ENCODE measurements at regions of chr6 and their contacts with region 1.

Region 1: DNA sequence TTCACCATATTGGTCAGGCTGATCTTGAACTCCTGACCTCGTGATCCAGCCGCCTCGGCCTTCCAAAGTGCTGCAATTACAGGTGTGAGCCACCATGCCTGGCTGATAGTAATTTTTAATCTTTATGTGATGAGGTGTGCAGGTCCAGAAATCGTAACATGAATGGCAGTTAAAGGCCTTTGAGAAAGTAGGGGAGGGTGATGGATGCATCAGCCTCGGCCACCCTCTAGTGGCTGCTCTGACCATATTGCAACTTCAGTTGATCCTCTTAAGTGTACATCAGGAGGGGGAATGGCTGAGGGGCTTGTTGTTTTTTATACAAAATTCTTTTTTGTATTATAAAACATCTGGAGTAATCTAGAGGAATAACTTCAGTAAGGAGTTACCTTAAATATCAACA is 193.0 kb downstream of the ZFAND3 start:
- DNase-seq: peak; percentile 64
- H3K27ac ChIP-seq: no peak overlapping the region
- CTCF ChIP-seq: peak; percentile 72

Region 2: DNA sequence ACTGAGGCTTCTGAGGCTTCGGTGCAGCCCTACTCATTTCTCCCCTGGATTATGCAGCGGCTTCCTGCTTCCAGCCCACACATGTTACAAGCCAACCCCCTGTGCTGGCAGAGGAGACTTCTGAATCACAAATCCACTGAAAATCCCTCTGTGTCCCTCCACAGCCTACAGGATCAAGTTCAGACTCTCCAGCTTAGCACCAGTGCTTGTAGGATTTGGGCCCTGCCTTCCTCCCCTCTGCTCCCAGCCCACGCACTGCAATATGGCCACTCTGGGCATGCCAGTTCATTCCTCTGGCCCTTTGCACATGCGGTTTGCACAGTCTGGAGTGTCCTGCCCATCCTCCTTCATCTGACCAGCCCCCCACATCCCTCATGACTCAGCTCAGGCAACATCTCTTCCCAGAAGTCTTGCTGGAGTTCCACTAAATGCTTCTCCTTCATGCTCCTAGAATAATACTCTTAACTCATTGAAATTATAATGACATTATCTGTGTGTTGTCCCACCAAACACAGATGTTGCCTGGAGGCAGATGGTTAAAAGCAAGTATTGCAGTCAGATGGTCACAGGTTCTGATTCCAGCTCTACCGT is 298.9 kb before region 1 on chr6:
- CTCF ChIA-PET with region 1: no interaction called
- POLR2A ChIA-PET with region 1: no interaction called
- DNase-seq: no peak
- H3K27ac ChIP-seq: 0 out of 2 replicates have a peak overlapping the region, but pooled peaks have one; percentile 11
- CTCF ChIP-seq: no peak

Region 3: DNA sequence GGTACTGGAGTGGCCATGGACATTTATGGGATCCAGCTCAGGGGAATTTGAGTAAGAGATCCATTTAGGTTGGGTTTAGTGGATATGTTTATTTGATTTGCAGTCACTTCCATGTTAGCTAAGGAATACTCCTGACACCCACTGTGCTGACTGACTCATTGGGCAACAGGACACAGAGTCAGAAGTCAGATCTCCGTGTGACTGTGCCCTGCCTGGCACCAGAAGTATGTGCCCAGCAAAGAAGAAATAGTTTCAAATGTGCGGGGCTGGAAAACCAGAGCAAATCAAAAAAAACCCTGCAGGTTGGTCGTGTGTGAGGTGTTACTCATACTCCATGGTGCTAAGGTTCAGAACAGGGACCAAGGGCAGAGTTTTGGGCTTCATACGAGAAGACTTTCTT is 252.8 kb before region 1 on chr6:
- CTCF ChIA-PET with region 1: no interaction called
- POLR2A ChIA-PET with region 1: interaction called, 11 read pairs
- DNase-seq: no peak
- H3K27ac ChIP-seq: no peak overlapping the region
- CTCF ChIP-seq: no peak

Region 4: GRCh38 chr6:37819177-37819823 is 193.3 kb before region 1 on chr6 and contains the start of gene ZFAND3:
- CTCF ChIA-PET with region 1: no interaction called
- POLR2A ChIA-PET with region 1: no interaction called
- DNase-seq: peak; percentile 96
- H3K27ac ChIP-seq: peak within 1 kb of the TSS; percentile 92
- CTCF ChIP-seq: no peak

Region 5: DNA sequence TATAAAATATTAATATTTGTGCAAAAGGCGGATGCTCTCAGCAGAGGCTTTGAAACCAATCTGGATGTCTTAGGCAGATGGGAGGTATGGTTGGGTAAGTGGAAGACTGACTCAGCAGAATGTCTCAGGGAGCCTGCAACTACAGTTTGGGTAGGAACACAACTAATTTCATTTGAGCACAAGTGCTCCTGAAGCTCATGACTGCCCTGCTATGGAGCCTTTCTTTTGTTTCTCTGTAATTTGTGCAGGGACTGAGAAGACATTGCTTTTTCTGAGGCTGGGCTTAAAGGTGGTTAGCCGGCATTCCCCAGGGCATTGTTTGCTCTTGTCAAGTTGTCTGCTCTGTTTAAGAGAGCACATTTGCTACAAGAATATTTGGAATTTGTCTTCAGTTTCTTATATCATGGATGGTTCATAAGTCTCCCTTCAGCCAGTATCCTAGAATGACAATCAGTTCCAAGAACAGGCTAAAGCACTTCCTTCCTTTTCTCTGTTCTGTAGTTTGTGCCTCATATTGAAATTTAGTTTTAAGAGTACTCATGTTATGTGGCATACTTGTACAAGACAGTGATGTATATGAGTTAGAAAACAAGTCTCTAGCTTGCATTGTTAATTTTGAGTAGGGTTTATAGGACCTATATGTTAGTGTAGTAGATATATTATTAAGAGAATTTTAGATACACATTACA is 15.3 kb after region 1 on chr6:
- CTCF ChIA-PET with region 1: no interaction called
- POLR2A ChIA-PET with region 1: no interaction called
- DNase-seq: no peak
- H3K27ac ChIP-seq: no peak overlapping the region
- CTCF ChIP-seq: no peak